ENCODE measurements at regions of chr17 and their contacts with region 1.

Region 1: DNA sequence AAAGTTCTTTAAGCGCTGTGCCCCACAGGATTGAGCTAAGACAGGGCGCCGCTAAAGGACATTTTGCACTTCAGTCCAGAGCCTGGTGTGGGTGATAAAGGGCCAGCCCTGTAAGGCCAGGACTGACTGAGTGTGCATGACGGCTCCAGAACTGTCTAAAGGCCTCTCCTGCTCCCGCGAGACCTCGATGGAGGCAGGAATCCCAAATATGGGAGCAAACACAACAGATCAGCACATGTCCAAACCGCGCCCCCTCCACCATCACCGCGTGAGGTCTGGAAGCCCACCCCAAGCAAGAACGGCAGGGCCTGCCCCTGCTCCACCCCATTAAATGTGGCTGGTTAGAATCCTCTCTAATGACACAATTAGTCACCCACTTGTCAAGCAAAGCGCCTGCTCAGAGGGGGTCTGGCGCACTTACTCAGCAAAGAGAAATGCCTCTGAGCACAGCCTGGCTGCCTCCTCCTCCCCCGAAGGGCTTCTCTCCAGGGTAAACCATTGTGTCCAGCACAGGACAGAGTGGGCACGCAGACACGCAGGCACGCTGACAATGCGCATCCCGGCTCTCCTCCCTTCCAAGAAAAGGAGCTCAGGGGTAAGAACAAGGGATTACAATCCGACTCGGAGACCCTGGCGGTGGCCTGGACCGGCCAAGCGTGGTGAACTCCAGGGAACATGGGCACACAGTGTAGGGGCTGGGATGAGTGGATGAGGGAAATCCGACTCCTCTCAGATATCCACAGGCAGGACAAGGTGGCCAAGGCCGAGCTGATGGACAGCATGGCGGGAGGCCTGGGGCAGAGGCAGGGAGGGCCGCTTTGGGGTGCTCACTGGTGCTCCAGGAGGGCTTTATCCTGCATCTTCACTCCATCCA is 1.5 kb downstream of the MXRA7 start:
- DNase-seq: peak; percentile 92
- H3K4me3 ChIP-seq: peak overlapping the region; percentile 58
- H3K27ac ChIP-seq: peak overlapping the region; percentile 71
- H3K4me1 ChIP-seq: peaks cover 27% of the 10 kb centered on the region
- H3K27me3 ChIP-seq: no peaks in the 10 kb centered on the region
- CTCF ChIP-seq: no peak

Region 2: GRCh38 chr17:76681222-76682137 is 27.8 kb before region 1 on chr17:
- CTCF ChIA-PET with region 1: interaction called, 16 read pairs
- POLR2A ChIA-PET with region 1: no interaction called
- intact Hi-C with region 1: no loop called
- DNase-seq: peak; percentile 76
- H3K4me3 ChIP-seq: no peak overlapping the region
- H3K27ac ChIP-seq: no peak overlapping the region
- H3K4me1 ChIP-seq: no peaks in the 10 kb centered on the region
- H3K27me3 ChIP-seq: no peaks in the 10 kb centered on the region
- CTCF ChIP-seq: peak; percentile 92

Region 3: DNA sequence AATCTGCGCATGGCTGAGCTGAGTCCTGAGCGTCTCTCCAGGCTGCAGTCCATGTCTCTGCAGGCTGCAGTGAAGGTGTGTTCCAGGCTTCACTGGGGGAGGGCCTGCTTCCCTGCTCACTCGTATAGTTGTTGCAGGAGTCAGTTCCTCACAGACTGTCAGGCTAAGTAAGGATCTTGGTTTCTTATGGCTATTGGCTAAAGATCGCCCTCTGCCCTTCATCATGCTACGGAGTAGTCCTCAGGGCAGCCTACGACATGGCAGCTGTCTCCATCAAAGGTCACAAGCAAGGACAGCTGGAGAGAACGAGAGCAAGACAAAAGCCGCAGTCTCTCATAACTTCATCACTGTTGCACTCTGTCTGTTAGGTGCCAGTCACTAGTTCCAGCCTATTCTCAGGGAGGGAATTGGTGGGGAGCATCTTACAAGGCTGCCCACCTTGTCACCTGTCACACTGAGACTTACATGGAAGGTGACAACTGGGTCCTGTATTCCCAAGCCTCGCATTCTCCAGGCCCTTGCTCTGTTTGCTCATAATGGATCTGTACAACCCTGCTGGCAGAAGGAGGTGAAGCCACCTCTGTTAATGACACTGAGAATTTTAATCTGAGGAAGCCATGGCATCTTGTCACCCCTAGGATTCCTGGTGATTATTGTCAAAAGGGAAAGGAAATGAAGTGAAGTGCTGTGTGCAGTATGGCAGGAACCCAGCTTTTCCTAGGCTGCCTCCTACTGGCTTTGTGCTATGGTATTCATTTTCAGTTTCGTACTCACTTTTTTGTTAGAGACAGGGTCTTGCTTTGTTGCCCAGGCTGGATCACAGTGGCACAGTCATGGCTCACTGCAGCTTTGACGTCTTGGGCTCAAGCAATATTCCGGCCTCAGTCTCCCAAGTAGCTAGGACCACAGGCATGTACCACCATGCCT is 72.0 kb after region 1 on chr17:
- CTCF ChIA-PET with region 1: no interaction called
- POLR2A ChIA-PET with region 1: no interaction called
- intact Hi-C with region 1: no loop called
- DNase-seq: peak; percentile 30
- H3K4me3 ChIP-seq: no peak overlapping the region
- H3K27ac ChIP-seq: no peak overlapping the region
- H3K4me1 ChIP-seq: no peaks in the 10 kb centered on the region
- H3K27me3 ChIP-seq: no peaks in the 10 kb centered on the region
- CTCF ChIP-seq: peak; percentile 41; the same call in 1 of the 2 replicates

Measured in A673 (cell line).